Naive thymus-derived CD4-positive, alpha-beta T cell (primary cell): ENCODE measurements at regions of chr6 and their contacts with region 1.

Region 1: DNA sequence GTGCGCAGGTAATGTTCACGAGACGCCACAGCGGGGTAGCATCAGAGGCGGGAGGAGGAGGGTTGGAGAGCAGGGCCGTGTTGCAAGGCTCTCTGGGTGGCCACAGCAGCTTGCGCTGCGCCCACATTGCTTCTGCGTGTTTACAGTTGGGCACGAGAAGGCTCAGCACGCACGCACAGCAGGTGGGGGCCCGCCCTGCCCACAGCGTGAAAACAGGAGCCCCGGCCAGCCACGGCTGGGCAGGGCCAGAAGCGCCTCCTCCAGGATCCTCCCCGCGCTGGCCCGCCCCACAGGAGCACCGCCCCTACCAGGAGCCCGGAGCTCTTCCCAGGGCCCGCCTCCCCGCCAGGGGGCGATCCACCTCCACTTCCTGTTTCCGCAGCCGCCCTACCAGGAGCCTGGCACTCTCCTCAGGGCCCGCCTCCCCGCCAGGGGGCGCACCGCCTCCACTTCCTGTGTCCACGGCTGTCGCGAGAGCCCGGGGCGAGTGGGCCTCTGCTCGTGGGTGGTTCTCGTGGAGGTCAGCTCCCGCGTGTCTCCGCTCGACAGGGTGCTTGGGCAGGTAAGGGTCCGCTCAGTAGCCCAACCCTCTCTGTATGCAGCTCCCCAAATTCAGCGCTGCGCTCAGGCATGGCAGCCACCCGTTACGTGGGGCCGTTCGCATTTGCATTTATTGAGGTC is at the start of gene FAM50B:
- DNase-seq: peak; percentile 84 to 92 (median 90)
- ATAC-seq: peak; percentile 99
- H3K4me3 ChIP-seq: peak within 1 kb of the TSS; percentile 72
- H3K4me3 Mint-ChIP-seq: peak within 1 kb of the TSS; percentile 68 to 89 (median 80)
- H3K27ac ChIP-seq: peak within 1 kb of the TSS; percentile 59
- H3K27ac Mint-ChIP-seq: peak within 1 kb of the TSS; percentile 27 to 95 (median 78)
- H3K4me1 ChIP-seq: peaks cover 0 to 6% of the 10 kb centered on the region in 2 donors
- H3K4me1 Mint-ChIP-seq: peaks cover 0 to 26% (median 16%) of the 10 kb centered on the region in 7 donors
- H3K27me3 ChIP-seq: no peaks in the 10 kb centered on the region
- H3K27me3 Mint-ChIP-seq: peaks cover 0 to 3% (median 0%) of the 10 kb centered on the region in 5 donors
- total RNA-seq, gene FAM50B: 3.4 to 14.1 (median 12.0) TPM

Region 2: DNA sequence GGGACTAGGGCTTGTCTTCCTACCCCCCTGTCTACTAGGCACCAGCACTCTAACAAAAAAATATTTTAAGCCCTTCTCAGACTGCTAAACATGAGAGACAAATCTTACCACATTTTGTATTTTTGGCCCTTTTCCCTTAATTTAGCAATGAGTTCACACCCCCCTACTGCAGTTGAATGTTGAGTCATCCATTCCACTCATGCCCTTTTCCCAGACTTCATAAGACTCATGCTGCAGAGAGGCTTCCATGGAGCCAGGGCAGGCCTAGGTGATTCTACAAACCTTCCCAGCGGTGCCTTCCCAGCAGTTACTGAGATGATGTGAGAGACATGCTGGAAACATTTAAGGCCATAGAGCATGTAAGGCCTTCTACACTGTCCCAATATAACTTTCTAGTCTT is 151.5 kb before region 1 on chr6:
- CTCF ChIA-PET with region 1: no interaction called
- POLR2A ChIA-PET with region 1: no interaction called
- intact Hi-C with region 1: no loop called
- DNase-seq: no peak
- ATAC-seq: no peak
- H3K4me3 ChIP-seq: no peak overlapping the region
- H3K4me3 Mint-ChIP-seq: no peak overlapping the region
- H3K27ac ChIP-seq: no peak overlapping the region
- H3K27ac Mint-ChIP-seq: peak overlapping the region in 1 of 9 donors; percentile 43
- H3K4me1 ChIP-seq: no peaks in the 10 kb centered on the region
- H3K4me1 Mint-ChIP-seq: no peaks in the 10 kb centered on the region
- H3K27me3 ChIP-seq: no peaks in the 10 kb centered on the region
- H3K27me3 Mint-ChIP-seq: peaks cover 0 to 15% (median 7%) of the 10 kb centered on the region in 5 donors

Region 3: DNA sequence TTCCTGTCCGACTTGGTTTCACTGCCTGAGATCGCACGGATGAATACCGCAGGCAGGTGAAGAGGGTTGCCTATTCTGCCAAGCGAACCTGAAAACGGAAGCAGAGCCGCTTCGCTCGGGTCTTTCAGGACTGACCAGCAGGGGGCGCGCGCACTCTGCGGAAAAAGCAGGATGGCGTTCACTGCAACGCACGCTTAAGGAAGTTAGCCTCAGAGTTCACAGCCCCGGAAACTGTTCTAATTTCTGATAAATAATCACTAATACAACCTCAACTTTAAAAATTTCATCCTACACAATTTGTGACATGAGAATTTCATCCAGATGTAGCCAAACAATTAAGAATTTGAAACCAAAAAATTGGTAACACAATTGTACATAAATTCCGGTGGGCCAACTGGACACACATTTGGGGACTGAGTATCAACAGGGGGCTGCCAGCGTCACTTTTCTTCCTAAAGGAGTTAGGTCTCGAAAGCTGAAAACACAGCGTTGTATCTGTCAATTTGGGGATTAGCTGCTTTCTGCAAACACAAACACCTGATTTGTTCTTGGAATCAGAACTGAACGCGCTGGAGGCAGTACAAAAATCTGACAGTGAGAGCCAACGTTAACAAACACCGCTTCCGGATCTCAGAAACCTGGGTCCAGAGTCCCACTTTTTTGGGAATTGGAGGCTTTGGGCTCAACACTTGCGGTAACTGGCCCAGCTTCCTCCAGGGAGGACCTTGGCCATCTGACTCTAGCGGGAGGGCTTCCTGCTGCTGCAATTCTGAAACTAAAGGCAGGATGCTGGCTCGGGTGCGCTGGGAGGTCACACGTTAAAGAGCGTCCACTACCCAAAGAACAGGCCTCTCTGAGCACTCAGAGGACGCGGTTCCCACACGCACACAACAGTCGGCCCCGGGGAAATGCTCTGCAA is 106.4 kb before region 1 on chr6:
- CTCF ChIA-PET with region 1: interaction called, 3 read pairs
- POLR2A ChIA-PET with region 1: no interaction called
- intact Hi-C with region 1: loop called (anchors 1 to 2 kb)
- DNase-seq: peak; percentile 73 to 92 (median 85)
- ATAC-seq: peak; percentile 94
- H3K4me3 ChIP-seq: no peak overlapping the region
- H3K4me3 Mint-ChIP-seq: peak overlapping the region; percentile 26 to 73 (median 58)
- H3K27ac ChIP-seq: no peak overlapping the region
- H3K27ac Mint-ChIP-seq: peak overlapping the region in 7 of 9 donors; percentile 2 to 81 (median 38)
- H3K4me1 ChIP-seq: peaks cover 0 to 5% of the 10 kb centered on the region in 2 donors
- H3K4me1 Mint-ChIP-seq: peaks cover 0 to 14% (median 12%) of the 10 kb centered on the region in 7 donors
- H3K27me3 ChIP-seq: no peaks in the 10 kb centered on the region
- H3K27me3 Mint-ChIP-seq: peaks cover 11 to 29% (median 17%) of the 10 kb centered on the region in 5 donors

Region 4: GRCh38 chr6:3874069-3874468 is 25.0 kb after region 1 on chr6:
- CTCF ChIA-PET with region 1: no interaction called
- POLR2A ChIA-PET with region 1: no interaction called
- intact Hi-C with region 1: no loop called
- DNase-seq: no peak
- ATAC-seq: no peak
- H3K4me3 ChIP-seq: no peak overlapping the region
- H3K4me3 Mint-ChIP-seq: no peak overlapping the region
- H3K27ac ChIP-seq: no peak overlapping the region
- H3K27ac Mint-ChIP-seq: no peak overlapping the region
- H3K4me1 ChIP-seq: peaks cover 0 to 8% of the 10 kb centered on the region in 2 donors
- H3K4me1 Mint-ChIP-seq: peaks cover 0 to 12% (median 7%) of the 10 kb centered on the region in 7 donors
- H3K27me3 ChIP-seq: no peaks in the 10 kb centered on the region
- H3K27me3 Mint-ChIP-seq: peaks cover 0 to 14% (median 9%) of the 10 kb centered on the region in 5 donors

Region 5: DNA sequence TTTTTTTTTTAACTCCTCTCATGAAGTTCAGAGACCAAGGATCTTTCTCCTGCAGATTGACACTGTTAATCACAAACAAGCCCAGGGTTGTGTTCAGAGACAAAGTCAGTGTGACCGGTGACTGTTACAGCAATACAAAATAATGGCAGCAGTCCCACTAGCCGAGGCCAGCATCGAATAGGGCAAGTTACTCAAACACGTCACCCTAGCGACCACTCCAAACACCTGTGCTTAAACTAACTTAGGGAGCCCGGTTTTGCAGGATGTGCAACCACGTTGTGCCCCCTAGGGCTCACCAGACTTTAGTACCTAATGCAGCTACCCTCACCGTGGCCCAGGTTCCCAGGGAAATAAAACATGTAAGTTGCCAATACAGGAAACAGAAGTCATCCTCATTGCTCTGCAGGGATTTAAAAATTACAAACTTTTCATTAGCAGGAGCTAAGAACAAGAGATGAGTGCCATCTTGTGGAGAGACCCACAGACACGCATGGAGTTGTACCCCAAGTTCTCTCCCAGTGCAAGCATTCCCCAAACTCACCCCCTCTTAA is 38.2 kb after region 1 on chr6:
- CTCF ChIA-PET with region 1: no interaction called
- POLR2A ChIA-PET with region 1: interaction called, 3 read pairs
- intact Hi-C with region 1: loop called in 1 of 2 experiments (anchors 1 kb)
- DNase-seq: no peak
- ATAC-seq: no peak
- H3K4me3 ChIP-seq: no peak overlapping the region
- H3K4me3 Mint-ChIP-seq: no peak overlapping the region
- H3K27ac ChIP-seq: no peak overlapping the region
- H3K27ac Mint-ChIP-seq: no peak overlapping the region
- H3K4me1 ChIP-seq: no peaks in the 10 kb centered on the region
- H3K4me1 Mint-ChIP-seq: no peaks in the 10 kb centered on the region
- H3K27me3 ChIP-seq: no peaks in the 10 kb centered on the region
- H3K27me3 Mint-ChIP-seq: peaks cover 0 to 8% (median 3%) of the 10 kb centered on the region in 5 donors

Region 6: GRCh38 chr6:3929281-3929798 is 80.3 kb after region 1 on chr6:
- CTCF ChIA-PET with region 1: interaction called, 16 read pairs
- POLR2A ChIA-PET with region 1: interaction called, 3 read pairs
- intact Hi-C with region 1: loop called in 1 of 2 experiments (anchors 1 kb)
- DNase-seq: no peak
- ATAC-seq: no peak
- H3K4me3 ChIP-seq: no peak overlapping the region
- H3K4me3 Mint-ChIP-seq: no peak overlapping the region
- H3K27ac ChIP-seq: no peak overlapping the region
- H3K27ac Mint-ChIP-seq: no peak overlapping the region
- H3K4me1 ChIP-seq: no peaks in the 10 kb centered on the region
- H3K4me1 Mint-ChIP-seq: no peaks in the 10 kb centered on the region
- H3K27me3 ChIP-seq: no peaks in the 10 kb centered on the region
- H3K27me3 Mint-ChIP-seq: peaks cover 0 to 13% (median 5%) of the 10 kb centered on the region in 5 donors

Region 7: DNA sequence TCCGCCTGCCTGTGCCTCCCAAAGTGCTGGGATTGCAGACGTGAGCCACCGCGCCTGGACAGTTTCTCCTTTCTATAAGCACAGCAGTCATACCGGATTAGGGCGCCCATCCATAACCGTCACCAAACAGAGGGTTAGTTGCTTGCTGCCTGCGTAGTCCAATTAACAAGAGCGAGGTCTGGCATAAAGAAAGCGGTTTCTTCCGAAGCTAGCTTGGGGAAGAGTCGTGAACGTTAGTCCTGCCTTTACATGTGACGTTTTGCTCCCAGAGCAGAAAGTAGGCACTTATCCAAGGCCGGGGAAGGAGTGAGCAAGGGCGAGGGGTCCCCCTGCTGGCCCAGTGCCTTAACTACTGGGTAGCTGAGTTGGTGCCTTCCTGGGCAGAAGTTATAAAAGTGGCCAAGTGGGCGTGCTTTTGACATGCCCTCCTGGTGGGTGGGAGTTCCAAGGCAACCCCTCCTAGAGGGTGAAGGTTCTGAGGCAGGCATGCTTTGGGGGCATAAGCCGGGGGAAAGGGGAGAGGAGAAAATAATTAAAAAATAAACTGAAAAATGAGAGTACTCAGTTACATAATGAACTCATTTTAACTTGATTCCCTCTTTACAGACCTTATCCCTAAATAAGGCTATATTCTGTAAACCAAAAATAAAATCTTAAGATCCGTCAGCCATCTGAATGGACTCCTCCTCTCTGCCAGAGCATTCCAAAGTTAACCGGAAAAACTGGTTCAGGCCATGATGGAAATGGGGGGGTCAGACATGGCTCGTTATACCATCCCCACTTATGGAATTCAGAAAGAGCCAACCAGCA is 141.8 kb after region 1 on chr6:
- CTCF ChIA-PET with region 1: no interaction called
- POLR2A ChIA-PET with region 1: no interaction called
- intact Hi-C with region 1: loop called in 1 of 2 experiments (anchors 1 kb)
- DNase-seq: peak; percentile 45 to 72 (median 58)
- ATAC-seq: peak; percentile 96
- H3K4me3 ChIP-seq: no peak overlapping the region
- H3K4me3 Mint-ChIP-seq: peak overlapping the region in 2 of 10 donors; percentile 19 to 29
- H3K27ac ChIP-seq: no peak overlapping the region
- H3K27ac Mint-ChIP-seq: peak overlapping the region in 3 of 9 donors; percentile 3 to 43 (median 19)
- H3K4me1 ChIP-seq: peaks cover 0 to 7% of the 10 kb centered on the region in 2 donors
- H3K4me1 Mint-ChIP-seq: peaks cover 13 to 37% (median 25%) of the 10 kb centered on the region in 7 donors
- H3K27me3 ChIP-seq: no peaks in the 10 kb centered on the region
- H3K27me3 Mint-ChIP-seq: no peaks in the 10 kb centered on the region